GM18951 (cell line): ENCODE measurements at regions of chr17 and their contacts with region 1.

Region 1: DNA sequence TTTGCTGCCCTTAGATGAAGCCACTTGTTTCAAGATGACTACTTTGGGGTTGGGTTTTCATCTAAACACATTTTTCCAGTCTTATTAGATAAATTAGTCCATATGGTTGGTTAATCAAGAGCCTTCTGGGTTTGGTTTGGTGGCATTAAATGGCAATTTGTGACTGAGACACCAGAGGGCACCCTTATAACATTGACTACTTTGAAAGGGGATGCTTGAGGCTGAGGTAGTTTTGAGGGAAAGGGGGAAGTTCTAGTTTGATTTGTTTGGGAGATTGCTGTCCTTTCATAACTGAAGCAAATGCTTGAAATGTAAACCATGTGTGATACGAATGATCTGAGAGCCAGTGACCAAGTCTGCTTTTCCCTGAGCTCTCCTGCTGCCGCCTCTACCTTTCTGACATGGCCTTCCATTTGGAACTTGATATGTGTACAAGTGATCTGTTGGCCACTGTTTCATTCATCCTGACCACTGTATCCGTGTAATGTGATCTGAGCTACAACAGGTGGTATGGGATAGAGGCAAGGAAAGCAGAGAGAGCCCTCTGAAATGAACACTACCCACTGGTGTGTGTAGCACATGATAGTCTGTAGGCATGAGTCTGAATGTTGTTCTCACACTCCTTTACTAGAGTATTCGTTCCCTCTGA is 5.8 kb upstream of the RARA start:
- POLR2A ChIP-seq: no peak

Region 2: GRCh38 chr17:40349920-40350909 is 47.1 kb after region 1 on chr17:
- in situ Hi-C with region 1: loop called (anchors 5 kb)
- POLR2A ChIP-seq: no peak